Head of caudate nucleus (tissue), 42 donors: ENCODE measurements at regions of chr15 and their contacts with region 1.

Region 1: GRCh38 chr15:56918046-56918938 is at the start of gene TCF12:
- DNase-seq: peak; percentile 77 to 96 (median 92)

Region 2: DNA sequence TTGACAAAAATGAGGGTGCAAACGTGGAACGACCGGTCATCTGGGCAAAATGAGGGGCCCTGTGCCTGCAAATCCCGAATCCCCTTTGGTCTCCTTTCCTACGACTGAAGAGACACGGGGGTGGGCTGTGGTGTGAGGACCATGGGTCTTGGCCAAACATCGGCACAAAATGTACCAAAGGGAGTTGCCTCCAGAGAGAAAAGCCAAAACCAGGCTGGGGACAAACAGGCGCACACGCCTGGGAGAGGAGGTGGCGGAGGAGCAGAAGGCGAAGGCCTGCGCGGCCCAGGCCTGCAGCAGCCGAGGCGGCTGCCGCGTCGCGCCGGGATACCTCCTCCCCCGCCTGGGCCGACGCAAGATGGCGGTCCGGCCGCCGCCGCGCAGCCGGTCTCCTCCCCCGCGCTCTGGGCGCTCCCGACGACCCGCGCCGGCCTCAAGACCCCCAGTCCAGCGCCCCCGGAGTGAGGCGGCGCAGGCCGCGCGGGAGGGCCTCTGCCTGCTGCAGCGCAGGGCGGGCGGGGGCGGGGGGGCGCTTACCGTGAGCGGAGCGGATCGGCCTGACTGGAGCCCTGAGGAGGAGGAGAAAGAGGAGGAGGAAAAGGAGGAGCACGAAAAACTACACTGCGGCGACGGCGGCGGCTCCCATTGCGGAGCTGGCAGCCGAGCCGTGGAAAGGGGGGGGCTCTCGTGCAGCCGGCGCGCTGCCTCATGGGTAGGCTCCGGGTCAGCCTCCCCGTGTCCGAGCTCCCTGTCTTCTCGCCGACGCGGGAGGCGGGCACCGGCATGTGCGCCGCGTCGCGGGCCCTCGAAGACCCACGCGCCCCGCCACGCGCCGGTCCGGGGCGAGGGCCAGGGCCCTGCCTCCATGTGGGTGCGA is 185.1 kb before region 1 on chr15 and contains the start of gene ZNF280D:
- intact Hi-C with region 1: loop called (anchors 5 kb)
- DNase-seq: peak; percentile 72 to 96 (median 89)

Region 3: GRCh38 chr15:56886932-56887781 is 31.1 kb before region 1 on chr15:
- intact Hi-C with region 1: loop called (anchors 1 kb)
- DNase-seq: peak; percentile 80 to 98 (median 95)

Region 4: DNA sequence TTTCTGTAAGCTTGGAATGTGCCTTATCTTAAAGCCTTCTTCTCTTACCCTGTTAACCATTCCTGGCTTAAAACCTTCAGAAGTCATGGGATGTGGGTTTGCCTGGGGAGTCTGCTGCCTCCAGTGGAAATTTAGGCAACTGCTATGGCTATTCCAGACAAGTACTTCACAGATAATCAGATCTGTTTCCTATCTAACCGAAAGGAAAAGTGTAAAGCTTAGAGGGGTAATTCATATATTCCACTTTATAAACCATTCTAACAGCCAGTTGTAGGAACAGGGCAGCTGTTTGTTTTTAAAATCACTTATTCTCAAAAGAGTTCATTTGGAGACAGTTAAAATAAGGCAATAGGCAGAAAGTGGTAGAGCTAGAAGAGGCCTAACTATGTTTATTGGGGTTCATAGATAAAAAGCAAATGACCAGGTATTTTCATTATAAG is 220.1 kb after region 1 on chr15:
- intact Hi-C with region 1: loop called (anchors 5 kb)
- DNase-seq: peak in 24 of 42 donors; percentile 26 to 80 (median 54)

Region 5: GRCh38 chr15:57213862-57214261 is 295.6 kb after region 1 on chr15:
- intact Hi-C with region 1: loop called (anchors 10 kb)
- DNase-seq: peak in 3 of 42 donors; percentile 13 to 44 (median 20)